Naive thymus-derived CD4-positive, alpha-beta T cell (primary cell): ENCODE measurements at regions of chr13 and their contacts with region 1.

Region 1: DNA sequence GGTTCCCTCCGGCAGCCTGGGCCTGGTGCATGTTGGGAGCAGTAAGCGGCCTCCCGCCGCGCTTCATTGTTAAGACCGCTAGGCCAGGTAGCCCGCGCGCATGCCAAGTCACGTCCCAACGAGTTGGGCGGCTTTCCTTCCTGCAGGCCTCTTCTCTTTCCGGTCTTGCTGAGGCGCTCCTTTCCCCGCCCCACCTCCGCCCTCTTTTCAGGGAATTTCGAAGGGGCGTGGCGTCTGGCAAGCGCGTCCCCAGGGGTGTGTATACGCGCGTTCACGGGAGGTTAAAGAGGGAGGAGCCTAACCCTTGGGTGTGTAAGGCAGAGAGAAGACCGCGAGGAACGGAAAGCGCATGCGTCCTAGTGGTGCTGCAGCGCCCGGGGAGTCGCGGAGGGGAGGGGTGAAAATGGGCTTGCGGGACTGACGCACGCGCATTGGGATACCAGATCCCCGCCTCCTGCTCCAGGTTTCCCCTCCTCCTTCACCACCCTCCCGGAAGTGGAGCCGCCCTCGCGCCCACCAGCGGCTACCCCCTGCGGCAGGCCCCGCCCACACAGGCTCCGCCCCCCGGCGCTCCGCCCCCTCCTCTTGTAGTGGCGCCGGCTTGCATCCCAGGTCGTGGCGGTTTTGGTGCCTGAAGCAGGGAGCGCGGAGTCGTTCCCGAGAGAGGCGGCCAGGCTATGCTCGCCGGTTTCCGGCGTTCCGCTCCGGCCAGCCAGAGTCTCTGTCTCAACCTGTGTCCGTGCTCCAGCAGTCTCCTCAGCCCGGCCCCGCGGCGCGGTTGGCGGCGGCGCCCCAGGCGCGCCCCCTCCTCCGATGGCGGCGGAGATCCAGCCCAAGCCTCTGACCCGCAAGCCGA is at the start of gene WDFY2:
- DNase-seq: peak; percentile 99 to 100 (median 100)
- ATAC-seq: peak; percentile 92
- H3K4me3 ChIP-seq: peak within 1 kb of the TSS; percentile 95
- H3K4me3 Mint-ChIP-seq: peak within 1 kb of the TSS; percentile 85 to 100 (median 98)
- H3K27ac ChIP-seq: peak within 1 kb of the TSS; percentile 88
- H3K27ac Mint-ChIP-seq: peak within 1 kb of the TSS; percentile 95 to 100 (median 98)
- H3K4me1 ChIP-seq: peaks cover 12 to 17% of the 10 kb centered on the region in 2 donors
- H3K4me1 Mint-ChIP-seq: peaks cover 26 to 47% (median 35%) of the 10 kb centered on the region in 7 donors
- H3K27me3 ChIP-seq: no peaks in the 10 kb centered on the region
- H3K27me3 Mint-ChIP-seq: peaks cover 0 to 3% (median 0%) of the 10 kb centered on the region in 5 donors
- total RNA-seq, gene WDFY2: 13.3 to 44.3 (median 21.1) TPM

Region 2: GRCh38 chr13:51192348-51192747 is 391.8 kb before region 1 on chr13:
- CTCF ChIA-PET with region 1: no interaction called
- POLR2A ChIA-PET with region 1: no interaction called
- intact Hi-C with region 1: no loop called
- DNase-seq: no peak
- ATAC-seq: no peak
- H3K4me3 ChIP-seq: no peak overlapping the region
- H3K4me3 Mint-ChIP-seq: no peak overlapping the region
- H3K27ac ChIP-seq: no peak overlapping the region
- H3K27ac Mint-ChIP-seq: no peak overlapping the region
- H3K4me1 ChIP-seq: no peaks in the 10 kb centered on the region
- H3K4me1 Mint-ChIP-seq: peaks cover 0 to 5% (median 0%) of the 10 kb centered on the region in 7 donors
- H3K27me3 ChIP-seq: no peaks in the 10 kb centered on the region
- H3K27me3 Mint-ChIP-seq: peaks cover 4 to 27% (median 7%) of the 10 kb centered on the region in 5 donors

Region 3: GRCh38 chr13:51222037-51222685 is 361.9 kb before region 1 on chr13 and contains the start of gene FAM124A:
- CTCF ChIA-PET with region 1: no interaction called
- POLR2A ChIA-PET with region 1: no interaction called
- intact Hi-C with region 1: loop called in 1 of 2 experiments (anchors 10 kb)
- DNase-seq: peak in 7 of 9 donors; percentile 9 to 75 (median 21)
- ATAC-seq: peak; percentile 85
- H3K4me3 ChIP-seq: peak within 1 kb of the TSS; percentile 31
- H3K4me3 Mint-ChIP-seq: peak within 1 kb of the TSS; percentile 64 to 82 (median 78)
- H3K27ac ChIP-seq: no peak within 1 kb of the TSS
- H3K27ac Mint-ChIP-seq: no peak within 1 kb of the TSS
- H3K4me1 ChIP-seq: peaks cover 0 to 4% of the 10 kb centered on the region in 2 donors
- H3K4me1 Mint-ChIP-seq: peaks cover 0 to 12% (median 0%) of the 10 kb centered on the region in 7 donors
- H3K27me3 ChIP-seq: peaks cover 4 to 10% of the 10 kb centered on the region in 2 donors
- H3K27me3 Mint-ChIP-seq: peaks cover 42 to 62% (median 54%) of the 10 kb centered on the region in 5 donors
- total RNA-seq, gene FAM124A: 0.12 to 0.85 TPM in 2 of 5 experiments, not detected in the others

Region 4: GRCh38 chr13:51614350-51614786 is 30.3 kb after region 1 on chr13:
- CTCF ChIA-PET with region 1: no interaction called
- POLR2A ChIA-PET with region 1: interaction called, 4 read pairs
- intact Hi-C with region 1: loop called (anchors 1 kb)
- DNase-seq: peak in 8 of 9 donors; percentile 33 to 65 (median 58)
- ATAC-seq: peak; percentile 92
- H3K4me3 ChIP-seq: peak overlapping the region; percentile 59
- H3K4me3 Mint-ChIP-seq: peak overlapping the region; percentile 62 to 90 (median 81)
- H3K27ac ChIP-seq: peak overlapping the region; percentile 67
- H3K27ac Mint-ChIP-seq: peak overlapping the region; percentile 79 to 98 (median 93)
- H3K4me1 ChIP-seq: peaks cover 3 to 4% of the 10 kb centered on the region in 2 donors
- H3K4me1 Mint-ChIP-seq: peaks cover 11 to 26% (median 16%) of the 10 kb centered on the region in 7 donors
- H3K27me3 ChIP-seq: no peaks in the 10 kb centered on the region
- H3K27me3 Mint-ChIP-seq: peaks cover 0 to 2% (median 0%) of the 10 kb centered on the region in 5 donors

Region 5: DNA sequence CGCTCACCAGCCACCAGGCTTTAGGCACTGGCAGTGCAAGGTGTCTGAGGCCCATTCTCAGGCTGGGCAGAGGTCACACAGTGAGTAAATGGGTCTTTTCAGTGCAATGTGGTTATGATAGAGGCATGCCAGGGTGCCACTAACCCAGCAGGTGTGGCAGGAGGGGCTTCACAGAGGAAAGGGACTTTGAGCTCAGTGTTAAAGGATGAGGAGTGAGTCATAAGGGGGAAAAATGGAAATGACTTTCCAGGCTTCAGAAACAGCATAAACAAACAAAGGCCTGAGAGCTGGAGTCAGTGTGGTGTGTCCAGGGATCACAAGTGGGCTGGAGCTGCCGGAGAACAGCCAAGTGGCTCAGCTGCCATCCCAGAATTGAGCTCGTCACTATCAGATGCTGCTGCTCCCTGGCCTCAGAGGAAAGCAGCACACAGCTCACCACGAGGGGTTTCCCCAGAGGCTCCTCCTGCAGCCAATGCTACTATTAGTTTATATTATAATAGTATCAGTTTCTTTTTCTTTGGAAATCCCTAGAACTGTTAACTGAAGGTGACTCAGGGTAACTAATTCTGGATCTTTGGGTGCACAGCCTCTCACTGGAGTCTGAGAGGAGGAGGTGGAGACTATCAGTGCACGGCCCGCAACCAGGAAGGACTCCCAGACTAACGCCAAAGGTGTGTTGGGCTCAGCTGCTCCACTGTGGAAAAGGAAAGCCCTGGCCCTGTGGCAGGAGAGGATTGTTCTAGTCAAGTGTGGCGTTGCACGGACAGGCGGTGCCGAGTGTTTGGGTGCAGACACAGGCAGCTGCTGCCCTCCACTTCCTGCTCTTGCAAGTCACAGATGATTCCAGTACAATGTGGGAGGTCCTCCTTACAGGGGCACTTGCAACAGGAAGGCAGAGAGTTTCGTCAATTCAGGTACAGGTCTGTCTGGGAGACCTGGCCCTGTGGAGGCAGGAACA is 180.4 kb after region 1 on chr13:
- CTCF ChIA-PET with region 1: interaction called, 3 read pairs
- POLR2A ChIA-PET with region 1: interaction called, 3 read pairs
- intact Hi-C with region 1: loop called (anchors 1 kb)
- DNase-seq: peak in 8 of 9 donors; percentile 19 to 62 (median 44)
- ATAC-seq: peak; percentile 88
- H3K4me3 ChIP-seq: peak overlapping the region; percentile 49
- H3K4me3 Mint-ChIP-seq: peak overlapping the region; percentile 74 to 90 (median 85)
- H3K27ac ChIP-seq: peak overlapping the region; percentile 68
- H3K27ac Mint-ChIP-seq: peak overlapping the region; percentile 88 to 95 (median 93)
- H3K4me1 ChIP-seq: peaks cover 6 to 15% of the 10 kb centered on the region in 2 donors
- H3K4me1 Mint-ChIP-seq: peaks cover 10 to 38% (median 29%) of the 10 kb centered on the region in 7 donors
- H3K27me3 ChIP-seq: no peaks in the 10 kb centered on the region
- H3K27me3 Mint-ChIP-seq: no peaks in the 10 kb centered on the region

Region 6: DNA sequence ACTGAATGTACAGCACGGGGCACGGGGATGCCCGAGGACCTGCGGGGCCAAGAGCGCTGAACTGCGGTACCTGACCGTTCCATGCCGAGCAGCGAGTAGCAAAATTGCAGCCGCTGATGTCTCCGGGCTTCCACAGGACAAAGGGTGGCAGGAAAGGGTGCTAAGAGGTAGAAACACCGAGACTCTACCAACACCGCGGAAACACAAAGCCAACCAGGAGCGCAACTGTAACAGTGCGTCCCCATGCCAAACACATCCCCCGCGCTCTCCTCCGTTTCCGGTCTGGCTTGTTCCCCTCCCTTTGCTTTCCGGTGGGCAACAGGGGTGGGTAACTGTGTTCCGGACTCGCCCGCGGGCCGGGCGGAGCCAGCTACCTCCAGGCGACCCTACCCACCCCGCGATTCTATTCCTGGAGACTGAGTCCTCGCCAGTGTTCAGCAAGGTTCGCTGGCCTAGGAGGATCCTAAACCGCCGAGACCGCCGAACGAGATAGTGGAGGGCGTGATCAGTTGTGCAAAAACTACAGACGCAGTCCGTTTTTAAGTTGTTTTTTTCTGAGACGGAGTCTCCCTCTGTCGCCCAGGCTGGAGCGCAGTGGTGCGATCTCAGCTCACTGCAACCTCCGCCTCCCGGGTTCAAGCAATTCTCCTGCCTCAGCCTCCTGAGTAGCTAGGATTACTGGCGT is 610.2 kb after region 1 on chr13:
- CTCF ChIA-PET with region 1: no interaction called
- POLR2A ChIA-PET with region 1: no interaction called
- intact Hi-C with region 1: loop called (anchors 1 kb)
- DNase-seq: peak; percentile 77 to 92 (median 84)
- ATAC-seq: peak; percentile 94
- H3K4me3 ChIP-seq: peak overlapping the region; percentile 67
- H3K4me3 Mint-ChIP-seq: peak overlapping the region; percentile 88 to 99 (median 98)
- H3K27ac ChIP-seq: peak overlapping the region; percentile 78
- H3K27ac Mint-ChIP-seq: peak overlapping the region; percentile 90 to 98 (median 95)
- H3K4me1 ChIP-seq: no peaks in the 10 kb centered on the region
- H3K4me1 Mint-ChIP-seq: peaks cover 15 to 42% (median 37%) of the 10 kb centered on the region in 7 donors
- H3K27me3 ChIP-seq: no peaks in the 10 kb centered on the region
- H3K27me3 Mint-ChIP-seq: peaks cover 0 to 3% (median 0%) of the 10 kb centered on the region in 5 donors